Esophagus muscularis mucosa (tissue), 4 donors: ENCODE measurements at regions of chr6 and their contacts with region 1.

Region 1: GRCh38 chr6:133889557-133890403 is 867 bp downstream of the TCF21 start:
- DNase-seq: no peak
- H3K4me3 ChIP-seq: peak overlapping the region; percentile 56 to 89 (median 69)
- H3K27ac ChIP-seq: peak overlapping the region; percentile 87 to 96 (median 89)
- H3K4me1 ChIP-seq: peaks cover 26 to 79% (median 65%) of the 10 kb centered on the region in 4 donors
- H3K27me3 ChIP-seq: peaks cover 0 to 57% (median 12%) of the 10 kb centered on the region in 4 donors
- CTCF ChIP-seq: no peak
- EP300 ChIP-seq: no peak
- POLR2A ChIP-seq: no peak

Region 2: GRCh38 chr6:133778414-133779130 is 111.2 kb before region 1 on chr6:
- intact Hi-C with region 1: loop called (anchors 10 kb)
- DNase-seq: no peak
- H3K4me3 ChIP-seq: no peak overlapping the region
- H3K27ac ChIP-seq: peak overlapping the region in 3 of 4 donors; percentile 39 to 42 (median 41)
- H3K4me1 ChIP-seq: peaks cover 0 to 23% (median 5%) of the 10 kb centered on the region in 4 donors
- H3K27me3 ChIP-seq: no peaks in the 10 kb centered on the region
- CTCF ChIP-seq: no peak
- EP300 ChIP-seq: no peak
- POLR2A ChIP-seq: no peak

Region 3: DNA sequence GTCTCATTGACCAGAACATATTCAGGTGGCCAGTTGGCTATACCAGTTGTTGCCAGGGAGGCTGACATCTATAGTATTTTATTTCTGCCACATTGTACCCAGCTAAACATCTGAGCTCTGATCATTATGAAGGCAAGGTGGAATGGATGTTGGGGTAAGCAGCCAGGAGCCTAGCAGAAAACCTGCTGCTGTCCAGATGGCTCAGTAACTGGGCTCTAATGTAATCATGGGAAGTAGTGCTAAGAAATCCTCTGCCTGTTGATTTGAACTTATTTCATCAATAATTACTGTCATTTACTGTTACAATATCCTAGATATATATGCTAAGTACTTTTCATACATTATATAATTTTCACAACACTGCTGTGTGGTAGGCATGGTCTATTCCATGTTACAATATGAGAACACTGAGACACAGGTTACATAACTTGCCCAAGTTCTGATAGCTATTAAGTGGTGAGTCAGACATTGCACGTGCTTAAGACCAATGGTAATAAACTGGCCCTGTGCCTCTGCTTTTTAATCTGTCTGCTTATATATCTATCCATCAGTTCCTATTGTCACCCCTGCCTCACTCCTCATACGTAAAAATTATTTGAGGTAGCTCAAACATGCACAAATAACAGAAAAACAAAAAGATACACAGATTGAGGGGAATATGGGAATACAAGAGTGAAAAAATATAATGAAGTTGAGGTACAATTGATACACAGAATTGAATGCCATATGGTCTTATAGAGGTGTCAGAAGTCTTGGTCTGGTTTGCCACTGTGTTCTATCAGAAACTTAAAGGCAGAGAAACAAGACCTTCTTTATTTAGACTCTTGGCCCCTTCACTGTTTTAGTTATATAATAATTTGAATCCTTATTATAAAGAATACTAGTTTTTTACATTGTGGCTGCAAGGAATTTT is 88.5 kb after region 1 on chr6:
- intact Hi-C with region 1: no loop called
- DNase-seq: no peak
- H3K4me3 ChIP-seq: no peak overlapping the region
- H3K27ac ChIP-seq: peak overlapping the region in 3 of 4 donors; percentile 22 to 53 (median 45)
- H3K4me1 ChIP-seq: peaks cover 13 to 38% (median 28%) of the 10 kb centered on the region in 4 donors
- H3K27me3 ChIP-seq: no peaks in the 10 kb centered on the region
- CTCF ChIP-seq: no peak
- EP300 ChIP-seq: no peak
- POLR2A ChIP-seq: no peak